Heart left ventricle (tissue), 16 donors: ENCODE measurements at regions of chr2 and their contacts with region 1.

Region 1: DNA sequence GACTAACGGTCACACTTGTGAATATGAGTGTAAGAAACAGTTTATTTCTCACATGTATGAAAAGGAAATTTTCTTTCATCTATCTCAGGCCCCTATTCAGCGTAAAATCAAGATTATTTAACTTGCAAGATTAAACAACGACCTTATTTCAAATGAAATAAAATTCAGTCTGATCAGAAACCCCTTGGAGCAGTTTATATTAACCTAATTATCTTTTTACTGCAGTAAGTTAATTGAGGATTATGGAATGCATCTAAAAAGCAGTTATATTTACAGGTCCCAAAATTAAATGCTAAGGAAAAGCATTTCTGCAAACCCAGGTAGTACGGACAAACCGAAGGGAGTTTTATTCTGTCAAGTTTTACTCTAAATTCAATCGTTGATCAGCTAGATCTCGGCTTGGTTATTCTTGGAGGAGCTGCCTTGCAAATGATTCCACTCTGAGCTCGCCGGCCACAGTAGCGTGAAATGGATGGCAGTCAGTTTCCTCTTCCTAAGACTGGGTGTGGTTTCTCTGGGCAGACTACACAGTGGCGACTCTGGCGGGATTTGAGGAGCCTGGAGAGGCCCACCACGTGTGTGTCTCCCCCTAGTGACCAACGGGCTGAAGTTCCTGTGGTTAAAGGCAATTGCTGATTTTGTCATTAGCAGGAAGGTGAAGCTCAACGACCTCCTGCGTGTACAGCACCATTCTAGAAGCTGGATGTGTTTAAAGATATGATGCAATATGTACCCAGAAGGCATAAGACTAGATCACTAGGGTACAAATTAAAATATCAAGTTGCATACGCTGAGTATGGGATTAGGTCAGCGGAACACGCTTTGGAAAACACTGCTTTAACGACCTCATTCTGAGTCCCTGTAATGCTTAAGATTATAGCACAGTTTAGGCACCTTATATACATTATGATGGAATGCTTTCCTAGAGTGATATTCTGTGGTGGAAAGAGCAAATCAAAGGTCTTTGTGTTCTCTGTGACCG is 36.4 kb downstream of the PRKRA start:
- DNase-seq: peak; percentile 87 to 93 (median 91)
- ATAC-seq: peak; percentile 94 to 97 (median 97)
- H3K4me3 ChIP-seq: peak overlapping the region; percentile 41 to 88 (median 66)
- H3K27ac ChIP-seq: peak overlapping the region; percentile 86 to 97 (median 92)
- H3K4me1 ChIP-seq: peaks cover 0 to 22% (median 6%) of the 10 kb centered on the region in 12 donors
- H3K27me3 ChIP-seq: no peaks in the 10 kb centered on the region
- CTCF ChIP-seq: peak; percentile 81 to 96 (median 90)
- POLR2A ChIP-seq: peak in 1 of 2 donors; percentile 46

Region 2: GRCh38 chr2:178128836-178129630 is 285.5 kb before region 1 on chr2:
- intact Hi-C with region 1: loop called in 2 of 10 experiments (anchors 5 to 10 kb)
- DNase-seq: no peak
- ATAC-seq: no peak
- H3K4me3 ChIP-seq: no peak overlapping the region
- H3K27ac ChIP-seq: no peak overlapping the region
- H3K4me1 ChIP-seq: peaks cover 0 to 4% (median 0%) of the 10 kb centered on the region in 12 donors
- H3K27me3 ChIP-seq: no peaks in the 10 kb centered on the region
- CTCF ChIP-seq: no peak
- POLR2A ChIP-seq: no peak

Region 3: DNA sequence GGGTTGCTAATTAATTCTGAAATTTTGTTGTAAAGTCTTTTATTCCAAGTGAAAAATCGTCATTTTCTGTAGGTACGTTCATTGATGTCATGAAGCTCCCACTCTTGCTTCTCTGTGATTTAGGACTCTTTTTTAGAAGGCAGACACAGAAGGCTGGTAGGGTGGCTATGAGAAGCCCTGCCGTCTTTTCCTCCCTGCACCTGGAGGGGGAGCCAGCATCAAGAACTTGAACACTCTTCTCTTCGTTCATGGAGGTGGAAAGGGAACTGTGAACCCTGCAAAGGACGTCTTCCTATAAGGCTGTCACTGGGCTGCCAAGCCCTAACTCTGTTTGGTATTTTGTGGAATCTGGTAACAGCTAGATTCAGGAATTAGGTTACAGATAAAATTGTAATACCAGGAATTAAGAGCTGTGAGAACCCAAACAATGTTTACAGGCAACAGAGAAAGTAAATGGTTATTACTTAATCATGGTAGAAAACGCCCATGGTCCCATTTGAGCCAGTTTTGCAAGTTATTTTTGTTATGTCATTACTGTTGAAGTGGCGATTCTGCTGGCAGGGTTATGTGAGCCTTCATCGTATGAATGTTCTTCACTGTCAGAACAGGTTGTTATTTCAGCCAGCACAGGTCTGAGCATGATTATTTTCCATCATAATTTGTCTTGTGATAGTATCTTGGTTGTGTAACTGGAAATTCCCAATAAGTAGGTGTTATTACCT is 108.0 kb before region 1 on chr2:
- intact Hi-C with region 1: loop called in 2 of 10 experiments (anchors 10 kb)
- DNase-seq: peak in 3 of 5 donors; percentile 25 to 46 (median 31)
- ATAC-seq: peak in 3 of 4 donors; percentile 68 to 72 (median 72)
- H3K4me3 ChIP-seq: no peak overlapping the region
- H3K27ac ChIP-seq: no peak overlapping the region
- H3K4me1 ChIP-seq: no peaks in the 10 kb centered on the region
- H3K27me3 ChIP-seq: no peaks in the 10 kb centered on the region
- CTCF ChIP-seq: peak in 8 of 12 donors; percentile 24 to 59 (median 44)
- POLR2A ChIP-seq: no peak

Region 4: DNA sequence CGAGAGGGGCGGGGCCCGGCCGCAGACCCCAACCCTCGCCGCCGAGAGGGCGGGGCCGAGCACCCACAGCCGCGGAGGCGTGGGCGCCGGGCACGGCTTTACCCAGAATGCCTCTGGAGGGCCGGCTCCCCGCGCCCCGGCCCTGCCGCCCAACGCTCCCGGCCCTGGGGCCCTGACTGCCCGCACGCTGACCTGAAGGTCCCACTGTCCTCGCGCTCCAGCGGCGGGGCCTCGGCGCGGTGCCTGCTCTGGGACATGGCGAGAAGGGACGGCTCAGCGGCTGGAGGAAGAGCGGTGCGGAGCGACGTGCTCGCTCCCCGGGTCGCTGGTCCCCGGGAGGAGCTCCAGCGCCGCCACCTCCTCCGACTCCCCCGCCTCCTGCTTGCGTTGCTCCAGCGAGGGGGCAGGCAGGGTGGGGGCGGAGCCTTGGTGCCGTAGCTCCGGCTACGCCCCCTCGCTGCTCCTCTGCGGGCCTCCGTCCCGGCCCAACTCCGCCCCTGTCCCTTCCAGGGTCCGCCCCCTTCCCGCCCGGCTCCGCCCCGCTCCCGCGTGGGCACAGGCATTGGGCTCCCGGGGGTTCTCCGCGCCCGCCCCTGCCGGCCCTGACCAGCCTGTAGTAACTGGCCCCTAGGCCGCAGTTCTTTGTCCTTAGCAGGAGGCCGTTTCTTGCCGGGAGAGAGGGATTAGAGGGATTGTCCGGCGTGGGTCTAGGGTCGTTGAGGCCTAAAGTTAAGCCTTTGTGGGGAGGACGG is 36.4 kb after region 1 on chr2 and contains the starts of genes PJVK and PRKRA:
- intact Hi-C with region 1: loop called in 1 of 10 experiments (anchors 2 kb)
- DNase-seq: peak; percentile 97 to 99 (median 98)
- ATAC-seq: peak; percentile 98 to 99 (median 98)
- H3K4me3 ChIP-seq: peak within 1 kb of the TSS; percentile 74 to 96 (median 90)
- H3K27ac ChIP-seq: peak within 1 kb of the TSS; percentile 88 to 99 (median 98)
- H3K4me1 ChIP-seq: peaks cover 0 to 35% (median 26%) of the 10 kb centered on the region in 12 donors
- H3K27me3 ChIP-seq: no peaks in the 10 kb centered on the region
- CTCF ChIP-seq: peak in 6 of 12 donors; percentile 3 to 43 (median 11)
- POLR2A ChIP-seq: peak; percentile 80 to 94
- total RNA-seq, gene PJVK: 0.48 to 1.7 (median 1.5) TPM in 8 of 9 donors, not detected in the other
- total RNA-seq, gene PRKRA: 35.2 to 64.3 (median 49.5) TPM